ENCODE measurements at regions of chr11 and their contacts with region 1.

Region 1: DNA sequence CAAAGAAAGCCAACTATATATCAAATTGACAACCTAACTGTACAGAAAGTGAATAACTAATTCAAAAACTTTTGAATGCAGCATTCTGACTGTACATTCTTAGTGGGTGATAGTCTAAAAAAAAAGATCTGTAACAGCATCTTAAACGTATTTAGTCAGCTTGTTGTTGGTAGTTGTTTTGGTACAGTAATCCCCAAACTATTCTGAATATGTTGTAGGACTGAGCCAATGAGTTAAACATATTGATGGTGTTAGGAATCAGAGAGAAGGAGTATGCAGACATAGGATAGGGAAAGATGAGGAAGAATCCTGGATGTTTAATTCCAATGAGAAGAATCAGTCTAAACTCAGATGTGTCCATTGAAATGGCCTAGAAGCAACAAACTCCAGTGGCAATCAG is 41.9 kb upstream of the KIRREL3 start:
- DNase-seq: peak; percentile 65
- H3K4me3 ChIP-seq: no peak overlapping the region
- H3K27me3 ChIP-seq: no peaks in the 10 kb centered on the region
- CTCF ChIP-seq: no peak

Region 2: GRCh38 chr11:127003260-127003981 is 39.0 kb before region 1 on chr11:
- CTCF ChIA-PET with region 1: no interaction called
- POLR2A ChIA-PET with region 1: interaction called, 13 read pairs
- DNase-seq: no peak
- H3K4me3 ChIP-seq: peak overlapping the region; percentile 48
- H3K27me3 ChIP-seq: no peaks in the 10 kb centered on the region
- CTCF ChIP-seq: peak; percentile 56

Measured in BJ (cell line).